Heart right ventricle (tissue), 16 donors: ENCODE measurements at regions of chr20 and their contacts with region 1.

Region 1: GRCh38 chr20:19460386-19460785 is 247.9 kb downstream of the SLC24A3 start:
- DNase-seq: no peak
- ATAC-seq: peak in 1 of 8 donors; percentile 10
- H3K4me3 ChIP-seq: no peak overlapping the region
- H3K27ac ChIP-seq: no peak overlapping the region
- H3K4me1 ChIP-seq: peaks cover 0 to 7% (median 0%) of the 10 kb centered on the region in 9 donors
- H3K27me3 ChIP-seq: peaks cover 0 to 11% (median 0%) of the 10 kb centered on the region in 7 donors
- CTCF ChIP-seq: no peak

Region 2: DNA sequence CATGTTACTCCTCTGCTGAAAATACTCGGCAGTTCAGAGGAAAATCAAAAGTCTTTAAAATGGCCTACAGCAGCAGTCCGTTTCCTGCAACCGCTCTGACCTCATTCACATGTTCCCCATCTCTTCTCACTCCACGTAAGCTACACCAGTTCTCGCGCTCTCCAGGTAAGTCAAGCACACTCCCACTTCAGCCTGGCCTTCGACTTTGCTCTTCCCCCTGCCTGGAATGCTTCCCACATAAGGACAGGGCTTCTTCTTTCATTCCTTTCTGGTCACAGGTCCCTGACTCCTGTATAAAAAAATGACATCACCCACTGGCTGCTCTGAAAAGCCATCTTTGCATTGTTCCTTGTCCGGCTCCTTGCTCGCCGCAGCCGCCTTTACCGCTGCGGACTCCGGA is 1448.9 kb before region 1 on chr20:
- intact Hi-C with region 1: loop called in 1 of 10 experiments (anchors 5 kb)
- DNase-seq: no peak
- ATAC-seq: no peak
- H3K4me3 ChIP-seq: no peak overlapping the region
- H3K27ac ChIP-seq: no peak overlapping the region
- H3K4me1 ChIP-seq: peaks cover 0 to 10% (median 0%) of the 10 kb centered on the region in 9 donors
- H3K27me3 ChIP-seq: no peaks in the 10 kb centered on the region
- CTCF ChIP-seq: no peak

Region 3: GRCh38 chr20:19336631-19337030 is 123.8 kb before region 1 on chr20:
- intact Hi-C with region 1: loop called in 1 of 10 experiments (anchors 10 kb)
- DNase-seq: no peak
- ATAC-seq: no peak
- H3K4me3 ChIP-seq: no peak overlapping the region
- H3K27ac ChIP-seq: no peak overlapping the region
- H3K4me1 ChIP-seq: peaks cover 0 to 8% (median 0%) of the 10 kb centered on the region in 9 donors
- H3K27me3 ChIP-seq: peaks cover 0 to 4% (median 0%) of the 10 kb centered on the region in 7 donors
- CTCF ChIP-seq: no peak

Region 4: GRCh38 chr20:19840111-19840710 is 379.8 kb after region 1 on chr20:
- intact Hi-C with region 1: no loop called
- DNase-seq: no peak
- ATAC-seq: no peak
- H3K4me3 ChIP-seq: no peak overlapping the region
- H3K27ac ChIP-seq: no peak overlapping the region
- H3K4me1 ChIP-seq: peaks cover 0 to 23% (median 11%) of the 10 kb centered on the region in 9 donors
- H3K27me3 ChIP-seq: no peaks in the 10 kb centered on the region
- CTCF ChIP-seq: no peak